Right ventricle myocardium inferior (tissue), 1 donor: ENCODE measurements at regions of chr19 and their contacts with region 1.

Region 1: GRCh38 chr19:40603389-40604135 is 2.4 kb downstream of the LTBP4 start:
- DNase-seq: peak; percentile 98
- ATAC-seq: peak; percentile 82

Region 2: DNA sequence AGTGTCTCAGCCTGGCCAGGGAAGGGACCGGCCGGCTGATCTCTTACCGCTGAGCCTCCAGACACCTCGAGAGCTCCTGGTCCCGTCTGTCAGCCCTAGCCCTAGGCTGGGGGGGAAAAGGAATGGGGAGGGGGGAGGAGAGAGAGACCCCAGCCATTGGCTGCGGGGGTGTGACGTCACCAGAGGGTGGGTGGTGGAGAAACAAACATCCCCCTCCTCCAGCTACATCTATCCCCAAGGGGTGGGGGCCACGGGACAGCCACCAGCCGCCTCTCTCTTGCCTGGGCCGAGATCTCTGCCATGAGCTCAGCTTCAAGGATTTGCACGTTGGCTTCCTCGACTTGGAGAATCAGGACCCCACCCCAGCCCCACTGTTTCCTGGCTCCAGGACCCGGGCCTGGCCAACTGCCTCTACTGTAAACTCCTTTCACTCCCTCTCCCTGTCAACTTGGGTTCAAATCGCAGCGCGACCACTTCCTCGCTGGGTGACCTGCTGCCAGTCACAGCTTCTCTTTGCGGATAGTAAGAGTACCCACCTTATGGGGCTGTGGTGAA is 190.2 kb before region 1 on chr19 and contains the start of gene PRX:
- intact Hi-C with region 1: loop called (anchors 5 kb)
- DNase-seq: no peak
- ATAC-seq: no peak
- total RNA-seq, gene PRX: 3.5 TPM

Region 3: DNA sequence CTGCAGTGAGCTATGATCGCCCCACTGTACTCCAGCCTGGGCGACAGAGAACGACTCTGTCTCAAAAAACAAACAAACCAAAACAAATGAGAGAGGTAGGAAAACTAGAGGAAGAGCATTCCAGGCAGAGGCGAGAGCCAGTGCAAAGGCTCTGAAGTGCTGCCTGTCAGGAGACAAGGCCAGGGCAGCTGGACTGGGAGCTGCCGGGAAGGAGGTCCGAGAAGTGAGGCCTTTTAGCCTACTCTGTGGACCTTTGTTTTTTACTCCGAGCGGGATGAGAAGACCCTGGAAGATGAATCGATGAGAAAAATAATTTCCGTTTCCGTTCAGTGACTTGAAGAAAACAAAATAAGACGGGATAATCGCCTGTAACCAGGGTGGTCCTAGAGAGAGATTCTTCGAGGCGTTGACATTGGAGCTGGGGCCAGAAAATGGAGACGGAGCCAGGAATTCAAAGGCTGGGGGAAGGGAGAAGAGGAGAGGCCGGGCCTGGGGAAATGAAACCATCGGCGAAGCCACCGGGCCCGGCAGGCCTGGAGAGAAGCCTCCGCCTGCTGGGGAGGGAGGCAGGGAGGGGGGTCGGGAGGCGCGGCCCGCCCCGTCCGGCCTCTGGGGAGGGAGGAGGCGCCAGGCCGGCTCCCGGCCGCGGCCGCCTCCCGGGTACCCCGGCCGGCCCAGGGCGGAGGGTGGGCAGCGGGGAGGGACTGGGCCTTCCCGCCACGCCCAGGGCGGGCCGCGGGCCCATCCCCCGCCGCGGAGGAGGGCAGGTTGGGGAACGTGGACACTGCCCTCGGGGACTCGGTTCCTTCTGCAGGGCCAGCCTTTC is 170.0 kb before region 1 on chr19:
- intact Hi-C with region 1: no loop called
- DNase-seq: peak; percentile 91
- ATAC-seq: peak; percentile 98

Region 4: GRCh38 chr19:40640744-40641143 is 37.2 kb after region 1 on chr19:
- intact Hi-C with region 1: loop called (anchors 2 kb)
- DNase-seq: no peak
- ATAC-seq: peak; percentile 22